Psoas muscle (tissue), 8 donors: ENCODE measurements at regions of chr18 and their contacts with region 1.

Region 1: DNA sequence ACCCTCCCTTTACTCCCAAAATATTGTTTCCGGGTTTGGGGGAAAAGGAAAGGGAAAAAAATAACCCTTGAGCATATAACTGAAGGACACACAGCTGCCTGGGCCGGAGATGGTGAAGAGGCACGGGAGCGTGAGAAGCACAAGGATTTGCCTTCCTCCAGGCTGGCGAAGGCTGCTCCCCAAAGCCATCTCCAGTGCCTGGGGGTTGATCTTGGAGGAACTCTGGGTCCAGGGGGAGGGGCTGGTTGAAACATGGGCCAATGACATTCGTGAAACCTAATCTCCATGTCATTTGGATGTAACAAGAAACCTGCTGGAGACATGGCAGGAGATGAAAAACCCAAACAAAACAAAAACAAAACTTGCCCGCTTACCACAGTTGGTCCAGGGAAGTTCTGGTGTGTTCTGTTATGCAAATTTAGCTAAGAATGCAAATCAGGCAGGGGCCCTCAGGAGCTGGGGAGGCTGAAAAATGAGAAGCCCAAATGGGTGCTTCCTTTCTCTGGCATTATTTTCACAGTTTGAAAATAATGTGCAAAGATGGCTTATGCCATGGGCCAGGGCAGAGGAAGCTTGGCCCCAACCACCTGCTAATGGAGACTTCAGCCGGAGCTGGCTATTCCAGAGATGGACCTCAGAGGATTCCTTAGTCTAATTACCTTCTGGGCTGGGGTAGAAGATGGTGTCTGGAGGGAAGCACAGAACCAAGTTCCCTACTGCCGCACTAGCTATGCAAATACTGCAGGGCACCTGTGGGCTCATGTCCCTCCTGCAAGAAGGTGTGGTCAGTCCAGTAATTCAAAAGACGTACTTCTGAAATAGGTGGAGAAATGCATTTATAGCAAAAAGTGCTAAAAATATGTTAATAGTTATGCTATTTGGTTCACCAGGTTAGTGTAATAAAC is 180.9 kb downstream of the BCL2 start:
- DNase-seq: peak in 1 of 2 donors; percentile 60
- ATAC-seq: peak; percentile 43 to 67 (median 54)
- H3K4me3 ChIP-seq: peak overlapping the region; percentile 61
- H3K27ac ChIP-seq: peak overlapping the region; percentile 82
- H3K4me1 ChIP-seq: peaks cover 57% of the 10 kb centered on the region
- H3K27me3 ChIP-seq: no peaks in the 10 kb centered on the region
- CTCF ChIP-seq: no peak

Region 2: DNA sequence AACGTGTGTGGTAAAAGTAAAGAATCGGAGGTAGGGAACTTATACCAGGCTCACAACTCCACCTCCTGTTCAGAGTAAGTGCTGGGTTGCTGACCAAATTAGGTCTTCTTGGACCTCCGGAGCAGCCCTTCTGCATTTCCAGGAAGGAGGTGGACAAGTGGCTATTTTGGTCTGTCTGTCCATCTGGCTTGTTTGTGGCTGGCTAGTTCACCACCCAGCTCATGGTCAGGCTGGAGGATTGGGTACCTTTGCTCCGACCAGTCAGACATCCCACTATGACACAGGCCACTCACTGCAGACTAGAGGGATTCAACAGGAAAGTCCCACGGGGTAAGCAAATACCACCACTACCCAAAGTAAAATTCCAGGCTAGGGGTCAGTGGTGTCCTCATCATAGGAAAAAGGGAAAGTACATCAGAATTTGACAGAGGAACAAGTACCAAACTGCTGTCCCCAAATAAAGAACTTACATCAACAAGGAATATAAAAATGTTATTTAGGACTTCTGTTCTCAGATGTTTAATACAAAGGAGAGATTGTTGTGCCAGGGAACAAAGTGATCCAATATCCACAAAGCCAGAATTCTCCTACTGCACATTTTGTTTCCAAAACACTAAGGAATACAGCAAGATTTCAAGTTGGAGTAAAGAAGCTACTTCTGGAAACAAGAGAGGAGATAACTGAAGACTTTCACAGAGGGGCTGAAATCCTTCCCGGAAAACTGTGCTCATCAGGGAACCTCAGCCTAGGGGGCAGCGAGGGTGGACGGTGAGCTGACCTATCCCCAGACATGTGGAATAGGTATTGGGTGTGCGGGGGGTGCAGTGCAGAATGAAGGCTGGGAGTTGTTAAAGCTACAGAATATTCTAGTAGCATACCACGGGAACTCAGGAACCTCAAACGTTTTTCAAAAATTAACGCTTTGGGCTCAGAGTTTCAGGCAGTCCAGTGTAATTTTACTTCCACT is 124.0 kb after region 1 on chr18:
- intact Hi-C with region 1: loop called (anchors 5 to 10 kb)
- DNase-seq: peak; percentile 28 to 63
- ATAC-seq: peak; percentile 87 to 91 (median 90)
- H3K4me3 ChIP-seq: peak overlapping the region; percentile 11
- H3K27ac ChIP-seq: peak overlapping the region; percentile 79
- H3K4me1 ChIP-seq: peaks cover 50% of the 10 kb centered on the region
- H3K27me3 ChIP-seq: no peaks in the 10 kb centered on the region
- CTCF ChIP-seq: peak; percentile 23